ENCODE measurements at regions of chr17 and their contacts with region 1.

Region 1: GRCh38 chr17:42659079-42659931 is at the start of gene TUBG2:
- DNase-seq: no peak
- H3K4me3 ChIP-seq: peak within 1 kb of the TSS; percentile 65 to 82 (median 76)
- H3K27ac ChIP-seq: peak within 1 kb of the TSS; percentile 84 to 90 (median 90)
- H3K4me1 ChIP-seq: peaks cover 17 to 31% (median 27%) of the 10 kb centered on the region in 4 donors
- H3K27me3 ChIP-seq: no peaks in the 10 kb centered on the region
- CTCF ChIP-seq: peak in 1 of 3 experiments; percentile 20
- EP300 ChIP-seq: no peak
- POLR2A ChIP-seq: no peak
- total RNA-seq, gene TUBG2: 25.3 to 40.2 (median 38.1) TPM

Region 2: GRCh38 chr17:42609182-42609813 is 50.0 kb before region 1 on chr17 and contains the starts of genes RETREG3 and TUBG1:
- intact Hi-C with region 1: loop called (anchors 5 kb)
- DNase-seq: peak; percentile 99
- H3K4me3 ChIP-seq: peak within 1 kb of the TSS; percentile 72 to 97 (median 86)
- H3K27ac ChIP-seq: peak within 1 kb of the TSS; percentile 89 to 95 (median 94)
- H3K4me1 ChIP-seq: peaks cover 31 to 52% (median 52%) of the 10 kb centered on the region in 4 donors
- H3K27me3 ChIP-seq: no peaks in the 10 kb centered on the region
- CTCF ChIP-seq: peak; percentile 19 to 53 (median 48)
- EP300 ChIP-seq: no peak
- POLR2A ChIP-seq: peak; percentile 59
- total RNA-seq, gene RETREG3: 42.7 to 93.3 (median 57.0) TPM
- total RNA-seq, gene TUBG1: 30.6 to 89.0 (median 55.0) TPM

Region 3: DNA sequence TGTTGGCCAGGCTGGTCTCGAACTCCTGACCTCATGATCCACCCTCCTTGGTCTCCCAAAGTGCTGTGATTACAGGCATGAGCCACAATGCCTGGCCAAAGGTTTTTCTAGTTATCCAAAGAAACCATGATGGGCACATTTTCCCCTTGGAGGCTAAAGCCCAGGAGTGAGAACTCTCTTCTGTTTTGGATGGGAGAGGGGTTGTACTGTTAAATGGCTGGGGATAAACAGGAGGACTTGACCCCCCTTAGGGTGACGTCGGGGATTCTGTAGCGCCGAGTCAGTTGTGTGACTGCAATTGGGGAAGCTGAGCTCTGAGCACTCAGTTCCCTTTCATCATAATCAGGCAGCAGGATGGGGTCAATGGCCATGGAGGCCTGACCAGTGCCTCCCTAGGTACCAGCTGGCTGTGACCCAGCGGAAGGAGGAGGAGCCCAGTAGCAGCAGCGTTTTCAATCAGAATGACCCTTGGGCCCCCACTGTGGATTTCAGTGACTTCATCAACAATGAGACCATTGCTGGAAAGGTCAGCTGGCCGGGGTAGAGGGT is 195.8 kb after region 1 on chr17:
- intact Hi-C with region 1: no loop called
- DNase-seq: no peak
- H3K4me3 ChIP-seq: peak overlapping the region; percentile 59 to 69 (median 62)
- H3K27ac ChIP-seq: peak overlapping the region; percentile 60 to 89 (median 87)
- H3K4me1 ChIP-seq: peaks cover 3 to 62% (median 54%) of the 10 kb centered on the region in 4 donors
- H3K27me3 ChIP-seq: no peaks in the 10 kb centered on the region
- CTCF ChIP-seq: no peak
- EP300 ChIP-seq: no peak
- POLR2A ChIP-seq: no peak

Measured in esophagus muscularis mucosa (tissue), 4 donors.